ENCODE measurements at regions of chr13 and their contacts with region 1.

Region 1: DNA sequence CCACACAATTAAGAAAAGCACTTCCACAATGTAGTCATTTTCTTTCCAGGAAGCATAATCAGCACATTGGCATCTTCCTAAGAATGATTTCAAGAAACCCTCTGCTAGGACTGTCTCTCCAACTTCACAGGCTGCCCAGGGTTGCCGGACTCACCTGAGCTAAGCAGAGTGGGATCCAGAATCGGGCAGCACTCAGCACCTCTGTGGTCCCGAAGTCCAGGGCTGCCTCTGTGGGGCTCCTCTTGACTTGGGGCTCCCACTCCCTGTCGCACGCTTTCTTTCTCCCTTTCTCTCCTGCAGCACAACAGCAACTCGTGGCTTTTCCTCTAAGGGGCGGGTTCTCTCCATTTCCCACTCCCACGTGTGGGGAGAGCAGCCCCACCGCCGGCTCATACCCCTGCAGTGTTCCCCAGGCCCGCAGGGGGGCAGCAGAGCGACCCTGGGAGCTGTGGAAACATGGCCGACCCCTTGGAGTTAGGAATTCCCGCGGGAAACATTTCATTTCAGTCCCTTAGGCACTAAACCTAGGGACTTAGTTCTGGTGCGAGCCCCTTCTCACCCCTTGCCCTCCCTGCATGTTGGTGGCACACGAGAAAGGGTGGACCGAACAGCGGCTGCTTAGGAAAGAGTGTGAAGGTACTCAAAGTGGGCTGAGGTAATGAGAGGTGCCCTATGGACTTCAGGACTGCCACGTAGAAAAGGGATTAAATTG is at the start of gene TMEM272:
- DNase-seq: peak; percentile 81
- ATAC-seq: peak; percentile 73
- H3K4me3 Mint-ChIP-seq: no peak within 1 kb of the TSS
- H3K27ac Mint-ChIP-seq: no peak within 1 kb of the TSS
- H3K4me1 Mint-ChIP-seq: peaks cover 4% of the 10 kb centered on the region; the same call in 1 of the 2 replicates
- H3K27me3 Mint-ChIP-seq: no peaks in the 10 kb centered on the region; the same call in 1 of the 2 replicates
- CTCF ChIP-seq: peak; percentile 89
- total RNA-seq, gene TMEM272: 0.09 to 0.21 TPM in 2 of 3 replicates, not detected in the other

Region 2: GRCh38 chr13:51814825-51815650 is 30.0 kb before region 1 on chr13:
- CTCF ChIA-PET with region 1: interaction called, 11 read pairs
- POLR2A ChIA-PET with region 1: no interaction called
- DNase-seq: peak; percentile 80
- ATAC-seq: peak; percentile 77
- H3K4me3 Mint-ChIP-seq: no peak overlapping the region; the same call in 1 of the 2 replicates
- H3K27ac Mint-ChIP-seq: peak overlapping the region; percentile 57; the same call in 1 of the 2 replicates
- H3K4me1 Mint-ChIP-seq: peaks cover 37% of the 10 kb centered on the region
- H3K27me3 Mint-ChIP-seq: peaks cover under 1% of the 10 kb centered on the region; the same call in 1 of the 2 replicates
- CTCF ChIP-seq: peak; percentile 74

Region 3: DNA sequence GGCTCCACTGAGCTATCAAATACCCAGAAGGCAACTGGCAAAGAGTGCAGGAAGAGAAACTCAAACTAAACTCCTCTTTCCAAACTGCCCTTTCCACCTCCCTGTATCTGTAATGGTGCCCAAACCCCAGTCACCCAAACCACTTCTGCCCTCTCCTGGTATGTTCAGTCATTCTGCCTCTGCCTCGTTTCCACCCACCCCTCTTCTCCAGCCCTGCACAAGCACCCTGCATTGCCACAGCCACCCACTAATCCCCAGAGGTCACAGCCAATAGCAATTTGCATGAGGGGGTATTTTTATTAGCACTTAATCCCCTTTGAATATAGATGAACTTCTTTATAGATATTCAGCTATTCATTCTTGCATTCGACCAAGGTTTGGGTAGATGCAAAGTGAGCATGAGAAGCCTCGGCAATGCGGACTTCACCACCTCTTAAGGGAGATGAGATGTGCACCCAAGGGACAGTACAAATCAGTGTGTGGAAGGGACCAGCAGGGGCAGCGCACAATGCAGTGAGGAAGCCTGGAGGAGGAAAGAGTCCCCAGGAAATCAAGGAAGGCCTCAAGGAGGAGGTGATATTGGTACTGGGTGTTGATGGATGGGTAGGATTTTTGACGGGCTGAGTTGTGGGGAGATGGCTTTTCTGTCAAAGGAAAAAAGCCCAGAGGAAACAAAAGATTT is 12.4 kb before region 1 on chr13:
- CTCF ChIA-PET with region 1: interaction called, 18 read pairs
- POLR2A ChIA-PET with region 1: no interaction called
- DNase-seq: no peak
- ATAC-seq: peak; percentile 90
- H3K4me3 Mint-ChIP-seq: no peak overlapping the region
- H3K27ac Mint-ChIP-seq: no peak overlapping the region
- H3K4me1 Mint-ChIP-seq: peaks cover 5% of the 10 kb centered on the region
- H3K27me3 Mint-ChIP-seq: no peaks in the 10 kb centered on the region; the same call in 1 of the 2 replicates
- CTCF ChIP-seq: no peak

Region 4: DNA sequence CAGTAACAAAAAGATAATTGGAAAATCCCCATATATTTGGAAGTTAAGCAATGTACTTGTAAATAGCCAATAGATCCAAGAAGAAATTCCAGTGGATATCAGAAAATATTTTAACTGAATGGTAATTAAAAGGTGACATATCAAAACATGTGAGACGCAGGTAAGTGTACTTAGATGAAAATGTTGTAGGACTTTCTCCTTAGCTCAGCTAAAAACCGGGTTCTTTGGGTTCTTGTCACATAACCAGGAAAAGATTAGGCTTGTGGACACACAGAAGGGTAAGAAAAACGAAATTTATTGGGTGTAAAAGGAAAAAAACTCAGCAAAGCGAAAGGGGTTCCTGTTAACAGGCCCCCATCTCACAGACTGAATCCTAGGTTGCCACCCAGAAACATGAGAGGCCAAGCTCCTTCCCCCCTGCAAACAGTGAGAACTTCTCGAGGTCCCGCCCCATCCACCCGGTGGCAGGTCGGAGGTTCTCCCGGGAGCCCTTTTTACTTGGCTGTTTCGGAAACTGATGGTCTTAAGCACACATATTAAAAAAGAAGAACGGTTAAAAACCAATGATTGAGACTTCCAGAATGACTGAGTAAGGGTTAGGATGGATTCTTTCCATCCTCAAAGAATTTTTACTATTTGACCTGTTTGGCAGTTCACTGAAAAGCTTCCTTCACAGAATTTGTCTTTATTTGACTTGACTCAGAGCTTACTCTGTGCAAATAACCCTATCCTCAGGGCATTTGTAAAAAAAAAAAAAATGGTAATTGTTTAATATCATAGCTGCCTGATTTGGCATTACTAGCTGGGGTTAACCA is 13.6 kb after region 1 on chr13:
- CTCF ChIA-PET with region 1: interaction called, 15 read pairs
- POLR2A ChIA-PET with region 1: no interaction called
- DNase-seq: no peak
- ATAC-seq: peak; percentile 91
- H3K4me3 Mint-ChIP-seq: peak overlapping the region; percentile 14; the same call in 1 of the 2 replicates
- H3K27ac Mint-ChIP-seq: no peak overlapping the region
- H3K4me1 Mint-ChIP-seq: peaks cover 10% of the 10 kb centered on the region
- H3K27me3 Mint-ChIP-seq: no peaks in the 10 kb centered on the region; the same call in 1 of the 2 replicates
- CTCF ChIP-seq: no peak

Measured in WTC11 (cell line).